Mammary epithelial cell (primary cell): ENCODE measurements at regions of chr9 and their contacts with region 1.

Region 1: DNA sequence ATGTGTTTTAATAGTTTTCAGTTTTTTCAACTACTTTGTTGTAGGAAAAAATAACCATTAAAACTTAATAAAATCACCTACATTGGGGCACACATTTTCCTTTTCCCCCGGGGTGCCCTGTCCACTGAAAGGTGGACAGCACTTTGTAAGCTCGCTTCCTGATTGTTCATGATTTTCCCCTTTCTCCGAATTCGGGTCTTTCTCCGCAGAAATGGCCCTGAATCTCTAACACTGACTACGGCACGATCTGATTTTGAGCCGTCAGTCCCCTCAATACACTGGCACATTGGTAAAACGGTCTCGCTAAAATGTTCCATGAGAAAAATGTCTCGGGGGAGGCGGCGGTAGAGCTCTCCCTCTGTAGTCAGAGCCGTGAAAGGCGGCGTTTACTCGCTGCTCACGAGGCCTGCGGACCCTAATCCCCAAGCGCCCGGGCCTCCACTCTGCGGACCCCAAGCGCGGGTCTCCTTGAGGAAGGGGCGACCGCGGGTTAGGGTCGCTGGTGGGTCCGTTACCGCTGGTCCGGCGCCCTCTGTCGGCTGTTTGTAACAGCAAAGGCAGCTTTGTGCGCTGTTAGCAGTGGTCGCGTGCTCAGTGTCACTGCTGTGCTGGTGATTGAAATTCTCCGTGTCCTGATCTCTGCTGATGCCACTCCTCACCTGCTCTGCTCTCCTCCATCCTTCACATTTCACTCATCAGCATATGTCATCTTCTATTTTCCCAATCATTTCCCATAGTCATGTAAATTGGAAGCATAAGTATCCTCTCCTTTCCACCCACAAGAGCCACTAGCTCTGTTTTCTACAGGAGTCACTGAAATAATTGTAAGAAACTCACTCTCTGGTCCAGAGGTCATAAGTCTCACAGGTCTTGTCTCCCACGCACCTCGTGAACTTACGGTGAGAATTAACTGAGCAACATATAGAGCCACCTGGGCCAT is 10.8 kb upstream of the IFNA2 start:
- DNase-seq: no peak
- H3K4me3 ChIP-seq: peak overlapping the region; percentile 51 to 58 (median 51)
- H3K27ac ChIP-seq: no peak overlapping the region
- H3K4me1 ChIP-seq: peaks cover 6% of the 10 kb centered on the region
- H3K27me3 ChIP-seq: peaks cover 11% of the 10 kb centered on the region
- CTCF ChIP-seq: peak; percentile 76 to 86

Region 2: DNA sequence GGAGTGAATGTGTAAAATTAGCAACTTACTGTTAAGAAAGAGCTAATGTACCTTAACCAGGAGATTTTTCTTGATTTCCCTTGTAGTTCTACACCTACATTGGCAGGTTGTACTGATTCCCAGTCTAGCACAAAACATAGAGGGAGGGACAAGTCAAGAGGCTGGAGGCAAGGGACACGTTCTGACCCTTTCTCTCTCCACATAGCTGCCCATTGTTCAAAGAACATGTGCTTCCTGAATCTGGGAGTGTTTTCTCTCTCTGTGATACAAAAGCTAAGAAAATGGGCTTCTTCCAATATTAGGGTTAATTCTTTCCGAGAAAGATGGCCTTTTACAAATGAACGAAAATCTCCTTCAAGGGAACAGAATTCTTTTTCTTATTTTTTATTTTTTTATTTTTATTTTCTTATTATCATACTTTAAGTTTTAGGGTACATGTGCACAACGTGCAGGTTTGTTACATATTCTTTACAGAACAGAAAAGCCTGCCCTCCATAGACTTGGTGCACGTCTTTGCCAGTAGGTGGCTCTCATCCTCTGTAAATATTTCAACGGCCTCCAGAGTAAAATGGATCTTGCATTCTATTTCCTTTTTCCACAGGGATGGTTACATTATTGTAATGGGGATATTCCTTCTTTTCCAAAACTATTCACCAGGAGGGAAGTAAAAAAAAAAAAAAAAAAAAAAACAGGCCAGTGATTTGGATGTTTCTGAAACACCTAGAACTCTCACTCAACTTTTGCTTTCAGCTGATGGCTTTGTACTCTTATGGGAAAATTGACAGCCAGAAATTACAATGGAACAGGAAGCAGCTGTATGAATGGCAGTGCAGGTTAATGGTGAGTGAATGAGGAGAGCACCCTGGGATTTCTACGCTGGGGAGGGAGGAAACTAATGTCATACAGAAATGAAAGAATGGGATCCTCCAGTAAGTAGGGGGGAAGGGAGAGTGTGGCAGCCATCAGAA is 77.8 kb before region 1 on chr9:
- CTCF ChIA-PET with region 1: no interaction called
- dilution Hi-C with region 1: no loop called
- in situ Hi-C with region 1: no loop called
- intact Hi-C with region 1: loop called (anchors 1 kb)
- DNase-seq: peak; percentile 25
- H3K4me3 ChIP-seq: no peak overlapping the region
- H3K27ac ChIP-seq: no peak overlapping the region
- H3K4me1 ChIP-seq: peaks cover 10% of the 10 kb centered on the region
- H3K27me3 ChIP-seq: no peaks in the 10 kb centered on the region
- CTCF ChIP-seq: peak; percentile 69 to 76

Region 3: DNA sequence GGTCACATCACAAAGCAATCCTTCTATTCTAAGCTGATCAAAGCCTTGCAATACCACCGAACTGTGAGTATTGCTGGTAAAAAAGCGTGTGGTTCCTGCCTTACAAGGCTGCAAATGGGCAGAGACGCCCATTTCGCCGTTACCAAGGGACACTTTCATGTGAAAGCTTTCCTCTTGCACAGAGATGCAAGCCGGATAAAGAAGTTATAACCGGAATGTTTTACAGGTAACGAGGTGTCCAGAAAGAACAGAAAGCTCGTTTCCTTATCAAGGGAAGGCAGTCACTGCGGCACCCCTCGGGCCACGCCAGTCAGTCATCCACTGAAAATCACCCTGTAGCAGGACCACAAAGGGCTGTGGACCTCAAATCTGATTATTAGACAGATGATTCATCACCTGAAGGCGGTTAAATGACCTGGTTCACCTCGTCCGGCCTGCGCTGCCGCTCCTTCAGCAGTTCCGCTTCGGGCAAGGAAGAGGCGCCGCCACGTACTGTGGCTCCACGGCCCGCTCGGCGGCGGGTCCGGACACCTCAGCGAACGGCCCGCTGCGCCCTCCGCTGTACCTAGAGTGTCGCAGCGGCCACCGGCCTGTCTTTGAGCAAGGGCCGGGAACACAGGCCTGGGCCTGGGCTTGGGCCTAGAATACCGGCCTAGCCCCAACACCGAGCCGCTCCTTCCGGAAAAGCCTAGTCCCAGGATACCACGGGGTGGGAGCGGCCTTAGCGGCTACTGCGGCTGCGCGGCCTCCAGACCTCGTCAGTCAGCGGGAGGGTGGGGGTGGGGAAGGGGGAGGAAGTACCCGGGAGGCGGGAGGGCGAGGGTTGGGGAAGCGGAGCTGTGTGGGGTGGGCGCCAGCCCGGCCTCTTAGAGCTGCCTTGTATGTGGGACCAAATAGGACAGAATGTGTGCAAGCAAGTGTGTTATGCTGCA is 61.1 kb before region 1 on chr9 and contains the start of gene KLHL9:
- CTCF ChIA-PET with region 1: no interaction called
- dilution Hi-C with region 1: loop called (anchors 5 kb)
- in situ Hi-C with region 1: no loop called
- intact Hi-C with region 1: loop called (anchors 2 kb)
- DNase-seq: peak; percentile 89
- H3K4me3 ChIP-seq: peak within 1 kb of the TSS; percentile 46 to 67 (median 65)
- H3K27ac ChIP-seq: peak within 1 kb of the TSS; percentile 96
- H3K4me1 ChIP-seq: peaks cover 26% of the 10 kb centered on the region
- H3K27me3 ChIP-seq: no peaks in the 10 kb centered on the region
- CTCF ChIP-seq: no peak
- total RNA-seq, gene KLHL9: 15.7 to 24.7 TPM